ENCODE measurements at regions of chr14 and their contacts with region 1.

Region 1: DNA sequence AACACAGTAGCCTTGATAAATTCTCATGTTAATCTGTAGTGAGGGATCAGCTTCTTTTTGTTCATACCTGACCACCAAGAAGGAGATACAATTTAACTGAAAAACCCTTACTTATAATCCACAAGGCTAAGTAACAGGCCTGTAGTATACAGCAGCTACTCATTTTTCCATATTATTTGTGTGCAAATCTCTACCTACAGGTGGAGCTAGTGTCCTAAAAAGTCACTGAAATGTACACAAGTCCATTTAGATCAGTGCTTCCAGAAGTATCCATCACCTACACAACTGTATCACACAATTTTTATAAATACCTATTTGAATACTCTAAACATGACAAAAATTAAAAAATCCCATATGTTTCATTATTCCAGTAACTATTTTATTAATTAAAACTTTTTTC is 173.2 kb downstream of the SLC35F4 start:
- DNase-seq: peak; percentile 68
- H3K4me3 ChIP-seq: no peak overlapping the region
- H3K27ac ChIP-seq: no peak overlapping the region
- H3K4me1 ChIP-seq: no peaks in the 10 kb centered on the region
- H3K27me3 ChIP-seq: no peaks in the 10 kb centered on the region
- CTCF ChIP-seq: peak; percentile 19 to 36
- POLR2A ChIP-seq: no peak

Region 2: DNA sequence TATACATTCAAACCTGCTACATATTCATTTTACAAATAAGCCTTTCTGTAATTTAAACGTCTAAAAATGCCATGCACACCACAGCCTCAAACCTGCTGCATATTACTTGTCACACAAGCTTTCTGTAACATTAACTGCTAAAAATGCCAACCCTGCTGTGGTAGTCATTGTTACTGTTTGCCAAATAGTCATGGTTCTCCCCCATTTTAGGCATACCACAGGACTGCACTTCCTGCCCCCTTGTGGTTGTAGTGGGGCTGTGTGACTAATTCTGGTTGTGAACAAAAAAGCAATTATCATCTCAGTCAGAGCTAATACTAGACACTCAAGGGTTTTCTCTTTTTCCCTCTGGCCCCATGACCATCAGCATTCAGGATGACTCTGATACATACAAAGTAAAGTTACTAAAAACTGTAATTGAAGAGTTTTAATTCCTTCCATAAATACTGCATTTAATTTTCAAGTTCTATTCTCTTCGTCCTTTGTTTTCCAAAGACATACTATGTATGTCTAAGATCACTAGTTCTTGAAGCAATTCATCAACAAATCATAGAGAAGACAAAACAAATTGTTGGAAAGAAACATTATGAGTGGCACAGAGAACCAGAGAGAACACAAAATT is 178.9 kb after region 1 on chr14:
- CTCF ChIA-PET with region 1: interaction called, 97 read pairs
- POLR2A ChIA-PET with region 1: no interaction called
- dilution Hi-C with region 1: no loop called
- intact Hi-C with region 1: loop called (anchors 1 kb)
- DNase-seq: peak; percentile 26
- H3K4me3 ChIP-seq: no peak overlapping the region
- H3K27ac ChIP-seq: no peak overlapping the region
- H3K4me1 ChIP-seq: no peaks in the 10 kb centered on the region
- H3K27me3 ChIP-seq: peaks cover 2% of the 10 kb centered on the region in 2 experiments
- CTCF ChIP-seq: peak; percentile 45 to 59
- POLR2A ChIP-seq: no peak

Region 3: GRCh38 chr14:57884175-57884574 is 191.5 kb after region 1 on chr14:
- CTCF ChIA-PET with region 1: interaction called, 17 read pairs
- POLR2A ChIA-PET with region 1: no interaction called
- dilution Hi-C with region 1: no loop called
- intact Hi-C with region 1: no loop called
- DNase-seq: no peak
- H3K4me3 ChIP-seq: no peak overlapping the region
- H3K27ac ChIP-seq: no peak overlapping the region
- H3K4me1 ChIP-seq: no peaks in the 10 kb centered on the region
- H3K27me3 ChIP-seq: no peaks in the 10 kb centered on the region
- CTCF ChIP-seq: no peak
- POLR2A ChIP-seq: no peak

Region 4: GRCh38 chr14:57889245-57889644 is 196.6 kb after region 1 on chr14:
- CTCF ChIA-PET with region 1: interaction called, 17 read pairs
- POLR2A ChIA-PET with region 1: no interaction called
- dilution Hi-C with region 1: no loop called
- intact Hi-C with region 1: no loop called
- DNase-seq: peak; percentile 3
- H3K4me3 ChIP-seq: no peak overlapping the region
- H3K27ac ChIP-seq: no peak overlapping the region
- H3K4me1 ChIP-seq: no peaks in the 10 kb centered on the region
- H3K27me3 ChIP-seq: no peaks in the 10 kb centered on the region
- CTCF ChIP-seq: no peak
- POLR2A ChIP-seq: no peak

Region 5: GRCh38 chr14:58072288-58073071 is 379.8 kb after region 1 on chr14:
- CTCF ChIA-PET with region 1: interaction called, 17 read pairs
- POLR2A ChIA-PET with region 1: no interaction called
- dilution Hi-C with region 1: no loop called
- intact Hi-C with region 1: loop called (anchors 2 kb)
- DNase-seq: peak; percentile 68
- H3K4me3 ChIP-seq: no peak overlapping the region
- H3K27ac ChIP-seq: no peak overlapping the region
- H3K4me1 ChIP-seq: no peaks in the 10 kb centered on the region
- H3K27me3 ChIP-seq: peaks cover 8 to 14% of the 10 kb centered on the region in 2 experiments
- CTCF ChIP-seq: peak; percentile 50 to 67
- POLR2A ChIP-seq: no peak